Left cardiac atrium (tissue), 4 donors: ENCODE measurements at regions of chrX and their contacts with region 1.

Region 1: GRCh38 chrX:20252381-20253231 is 14.1 kb downstream of the RPS6KA3 start:
- DNase-seq: peak; percentile 37
- ATAC-seq: peak; percentile 55 to 57

Region 2: GRCh38 chrX:20037186-20037585 is 215.4 kb before region 1 on chrX:
- intact Hi-C with region 1: no loop called
- DNase-seq: no peak
- ATAC-seq: no peak

Region 3: GRCh38 chrX:20442597-20442996 is 190.0 kb after region 1 on chrX:
- intact Hi-C with region 1: loop called (anchors 5 to 10 kb)
- DNase-seq: peak; percentile 85
- ATAC-seq: peak; percentile 67 to 78